A673 (cell line): ENCODE measurements at regions of chr7 and their contacts with region 1.

Region 1: GRCh38 chr7:151501676-151502075 is 18.0 kb downstream of the RHEB start:
- DNase-seq: no peak
- H3K4me3 ChIP-seq: no peak overlapping the region
- H3K27ac ChIP-seq: no peak overlapping the region
- H3K4me1 ChIP-seq: peaks cover 7% of the 10 kb centered on the region
- H3K27me3 ChIP-seq: no peaks in the 10 kb centered on the region
- CTCF ChIP-seq: no peak

Region 2: GRCh38 chr7:151131592-151132293 is 369.9 kb before region 1 on chr7:
- CTCF ChIA-PET with region 1: no interaction called
- POLR2A ChIA-PET with region 1: interaction called, 12 read pairs
- intact Hi-C with region 1: no loop called
- DNase-seq: no peak
- H3K4me3 ChIP-seq: no peak overlapping the region
- H3K27ac ChIP-seq: no peak overlapping the region
- H3K4me1 ChIP-seq: no peaks in the 10 kb centered on the region
- H3K27me3 ChIP-seq: no peaks in the 10 kb centered on the region
- CTCF ChIP-seq: no peak

Region 3: DNA sequence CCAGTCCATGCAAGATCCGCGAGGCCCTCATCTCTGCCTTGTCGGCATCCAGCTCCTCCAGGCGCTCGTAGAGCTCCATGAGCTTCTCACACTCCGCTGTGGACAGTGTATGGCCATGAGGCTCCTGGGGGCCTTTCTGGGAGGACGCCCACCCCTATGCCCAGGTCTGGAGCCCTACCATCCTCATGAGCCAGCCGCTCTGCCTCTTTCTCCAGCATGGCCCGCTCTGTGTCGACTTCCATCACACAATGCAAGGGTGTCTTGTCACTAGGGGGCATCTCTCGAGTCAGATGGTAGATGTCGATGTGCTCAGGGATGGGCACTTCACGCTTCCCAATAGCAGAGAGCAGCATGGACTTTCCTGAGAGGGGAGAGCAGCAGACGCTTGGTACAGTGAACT is 277.9 kb before region 1 on chr7:
- CTCF ChIA-PET with region 1: no interaction called
- POLR2A ChIA-PET with region 1: no interaction called
- intact Hi-C with region 1: no loop called
- DNase-seq: no peak
- H3K4me3 ChIP-seq: no peak overlapping the region
- H3K27ac ChIP-seq: no peak overlapping the region
- H3K4me1 ChIP-seq: peaks cover 5% of the 10 kb centered on the region
- H3K27me3 ChIP-seq: no peaks in the 10 kb centered on the region
- CTCF ChIP-seq: no peak

Region 4: GRCh38 chr7:151261529-151261928 is 240.1 kb before region 1 on chr7:
- CTCF ChIA-PET with region 1: no interaction called
- POLR2A ChIA-PET with region 1: no interaction called
- intact Hi-C with region 1: no loop called
- DNase-seq: no peak
- H3K4me3 ChIP-seq: no peak overlapping the region
- H3K27ac ChIP-seq: no peak overlapping the region
- H3K4me1 ChIP-seq: no peaks in the 10 kb centered on the region
- H3K27me3 ChIP-seq: no peaks in the 10 kb centered on the region
- CTCF ChIP-seq: no peak

Region 5: DNA sequence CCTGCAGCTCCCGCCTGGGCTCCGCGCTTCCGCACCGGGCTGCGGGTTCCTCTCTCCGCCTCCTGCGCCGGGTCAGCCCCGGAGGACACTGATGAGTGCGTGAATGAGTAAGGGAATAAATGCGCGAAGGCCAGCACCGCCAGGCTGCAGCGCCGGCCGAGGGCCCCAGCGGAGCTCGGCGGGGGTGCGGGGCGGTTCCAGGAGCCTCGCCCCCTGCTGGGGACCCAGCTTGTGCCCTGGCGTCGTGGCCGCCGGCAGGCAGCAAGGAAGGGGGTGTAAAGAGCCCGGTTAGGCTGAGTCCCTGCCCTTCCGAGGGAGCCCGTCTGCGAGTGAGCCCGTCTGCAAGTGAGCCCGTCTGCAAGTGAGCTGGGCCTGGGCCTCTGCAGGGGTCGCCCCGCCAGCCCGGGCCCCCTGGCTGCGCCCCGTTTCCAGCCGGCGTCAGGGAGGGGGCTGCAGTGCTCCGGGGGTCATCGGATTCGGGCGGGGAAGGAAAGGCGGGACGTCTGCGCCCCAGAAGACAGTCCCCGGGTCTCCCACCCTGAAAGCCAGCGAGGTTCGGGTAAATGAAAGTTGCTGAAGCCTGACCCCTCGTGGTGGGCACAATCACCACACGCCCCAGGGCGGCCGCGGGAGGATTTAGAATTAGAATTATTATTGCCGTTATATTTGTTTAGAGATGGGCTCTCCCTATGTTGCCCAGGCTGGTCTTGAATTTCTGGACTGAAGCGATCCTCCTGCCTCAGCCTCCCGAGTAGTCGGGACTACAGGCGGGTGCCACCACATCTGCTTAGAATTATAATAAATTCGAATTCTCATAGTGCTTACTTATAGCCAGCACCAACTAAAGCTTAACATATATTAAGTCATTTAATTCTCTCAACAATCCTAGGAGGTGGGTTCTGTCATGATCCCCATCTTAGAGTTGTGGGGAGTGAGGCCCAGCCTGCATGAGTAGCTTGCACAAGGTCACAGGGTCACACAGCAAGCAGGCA is 53.1 kb before region 1 on chr7:
- CTCF ChIA-PET with region 1: no interaction called
- POLR2A ChIA-PET with region 1: no interaction called
- intact Hi-C with region 1: no loop called
- DNase-seq: peak; percentile 77
- H3K4me3 ChIP-seq: peak overlapping the region; percentile 58
- H3K27ac ChIP-seq: peak overlapping the region; percentile 67
- H3K4me1 ChIP-seq: peaks cover 4% of the 10 kb centered on the region
- H3K27me3 ChIP-seq: no peaks in the 10 kb centered on the region
- CTCF ChIP-seq: peak; percentile 84